ENCODE measurements at regions of chr21 and their contacts with region 1.

Region 1: GRCh38 chr21:35217504-35218060 is 168.5 kb upstream of the RUNX1 start:
- DNase-seq: peak; percentile 100
- H3K4me3 ChIP-seq: no peak overlapping the region
- H3K27ac ChIP-seq: peak overlapping the region; percentile 98
- H3K4me1 ChIP-seq: peaks cover 28% of the 10 kb centered on the region
- H3K27me3 ChIP-seq: no peaks in the 10 kb centered on the region
- CTCF ChIP-seq: no peak

Region 2: DNA sequence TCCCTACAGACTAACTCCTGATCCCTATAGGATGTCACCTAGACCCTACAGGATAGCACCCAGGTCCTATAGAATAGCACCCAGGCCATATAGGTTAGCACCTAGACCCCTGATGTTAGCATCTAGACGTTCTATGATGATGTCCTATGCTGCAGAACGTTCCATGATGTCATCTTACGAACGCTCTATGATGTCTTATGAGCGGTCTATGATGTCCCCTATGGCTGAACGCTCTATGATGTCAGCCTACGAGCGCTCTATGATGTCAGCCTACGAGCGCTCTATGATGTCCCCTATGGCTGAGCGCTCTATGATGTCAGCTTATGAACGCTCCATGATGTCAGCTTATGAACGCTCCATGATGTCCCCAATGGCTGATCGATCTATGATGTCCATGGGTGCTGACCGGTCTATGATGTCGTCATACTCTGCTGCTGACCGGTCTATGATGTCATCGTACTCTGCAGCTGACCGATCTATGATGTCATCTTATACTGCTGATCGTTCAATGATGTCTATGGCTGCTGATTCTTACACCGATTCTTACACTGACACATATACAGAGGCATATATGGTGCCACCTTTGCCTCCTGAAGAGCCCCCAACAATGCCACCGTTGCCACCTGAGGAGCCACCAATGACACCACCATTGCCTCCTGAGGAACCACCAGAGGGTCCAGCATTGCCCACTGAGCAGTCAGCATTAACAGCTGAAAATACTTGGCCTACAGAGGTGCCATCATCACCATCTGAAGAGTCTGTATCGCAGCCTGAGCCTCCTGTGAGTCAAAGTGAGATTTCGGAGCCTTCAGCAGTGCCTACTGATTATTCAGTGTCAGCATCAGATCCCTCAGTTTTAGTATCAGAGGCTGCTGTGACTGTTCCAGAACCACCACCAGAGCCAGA is 1665.2 kb before region 1 on chr21:
- CTCF ChIA-PET with region 1: no interaction called
- dilution Hi-C with region 1: no loop called
- in situ Hi-C with region 1: no loop called
- intact Hi-C with region 1: no loop called
- DNase-seq: no peak
- H3K4me3 ChIP-seq: no peak overlapping the region
- H3K27ac ChIP-seq: no peak overlapping the region
- H3K4me1 ChIP-seq: no peaks in the 10 kb centered on the region
- H3K27me3 ChIP-seq: no peaks in the 10 kb centered on the region
- CTCF ChIP-seq: no peak

Region 3: DNA sequence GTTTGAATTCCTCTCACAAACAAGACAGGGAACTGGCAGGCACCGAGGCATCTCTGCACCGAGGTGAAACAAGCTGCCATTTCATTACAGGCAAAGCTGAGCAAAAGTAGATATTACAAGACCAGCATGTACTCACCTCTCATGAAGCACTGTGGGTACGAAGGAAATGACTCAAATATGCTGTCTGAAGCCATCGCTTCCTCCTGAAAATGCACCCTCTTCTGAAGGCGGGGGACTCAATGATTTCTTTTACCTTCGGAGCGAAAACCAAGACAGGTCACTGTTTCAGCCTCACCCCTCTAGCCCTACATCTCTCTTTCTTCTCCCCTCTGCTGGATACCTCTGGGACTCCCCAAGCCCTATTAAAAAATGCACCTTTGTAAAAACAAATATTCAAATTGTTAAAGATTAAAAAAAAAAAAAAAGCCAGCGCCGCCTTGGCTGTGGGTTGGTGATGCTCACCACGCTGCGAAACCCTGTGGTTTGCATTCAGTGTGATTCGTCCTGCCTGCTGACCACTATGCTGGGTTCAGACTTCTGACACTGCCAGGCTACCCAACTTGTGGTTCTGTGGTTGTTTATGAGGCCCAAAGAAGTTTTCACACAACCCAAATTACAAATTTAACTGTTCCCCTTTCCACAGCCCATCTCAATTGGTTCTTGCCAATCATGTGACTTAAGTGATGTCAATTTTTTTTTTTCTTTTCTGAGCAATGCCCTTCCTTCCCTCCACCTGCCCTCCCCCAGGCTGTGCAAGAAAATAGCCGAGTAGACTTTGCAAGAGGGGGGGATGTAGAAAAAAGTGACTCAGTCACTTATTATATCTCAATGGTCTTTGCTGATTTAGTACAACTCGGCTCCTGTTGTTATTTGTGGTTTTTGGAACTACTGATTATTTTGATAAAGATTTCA is 168.6 kb before region 1 on chr21 and contains the start of gene RUNX1:
- CTCF ChIA-PET with region 1: no interaction called
- dilution Hi-C with region 1: no loop called
- in situ Hi-C with region 1: no loop called
- intact Hi-C with region 1: loop called (anchors 1 kb)
- DNase-seq: peak; percentile 91
- H3K4me3 ChIP-seq: peak within 1 kb of the TSS; percentile 13 to 35 (median 34)
- H3K27ac ChIP-seq: peak within 1 kb of the TSS; percentile 90
- H3K4me1 ChIP-seq: peaks cover 32% of the 10 kb centered on the region
- H3K27me3 ChIP-seq: no peaks in the 10 kb centered on the region
- CTCF ChIP-seq: no peak
- total RNA-seq, gene RUNX1: 126 to 133 TPM

Region 4: GRCh38 chr21:35149698-35150097 is 67.9 kb before region 1 on chr21:
- CTCF ChIA-PET with region 1: no interaction called
- dilution Hi-C with region 1: no loop called
- in situ Hi-C with region 1: no loop called
- intact Hi-C with region 1: loop called (anchors 2 kb)
- DNase-seq: peak; percentile 84
- H3K4me3 ChIP-seq: no peak overlapping the region
- H3K27ac ChIP-seq: peak overlapping the region; percentile 99
- H3K4me1 ChIP-seq: peaks cover 69% of the 10 kb centered on the region
- H3K27me3 ChIP-seq: no peaks in the 10 kb centered on the region
- CTCF ChIP-seq: no peak

Region 5: DNA sequence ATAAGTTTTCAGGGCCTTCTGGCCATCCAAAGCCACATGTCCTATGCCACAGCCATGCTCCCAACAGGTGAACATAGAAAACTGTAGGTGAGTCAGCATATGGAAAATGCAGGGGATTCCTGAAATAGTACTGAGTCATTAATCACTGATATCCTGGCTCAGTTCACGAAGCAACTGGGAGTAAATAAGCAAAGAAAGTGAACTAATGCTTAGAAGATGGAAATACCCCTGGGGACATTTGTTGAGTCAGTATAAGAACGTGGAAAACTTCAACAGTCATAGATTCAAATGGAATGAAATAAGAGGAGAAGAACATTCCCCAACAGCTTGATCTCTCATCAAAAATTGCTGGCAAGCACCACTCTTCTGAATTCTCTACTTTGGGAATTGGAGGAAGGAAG is 19.6 kb before region 1 on chr21:
- CTCF ChIA-PET with region 1: no interaction called
- dilution Hi-C with region 1: no loop called
- in situ Hi-C with region 1: no loop called
- intact Hi-C with region 1: loop called (anchors 1 kb)
- DNase-seq: peak; percentile 99
- H3K4me3 ChIP-seq: no peak overlapping the region
- H3K27ac ChIP-seq: peak overlapping the region; percentile 96
- H3K4me1 ChIP-seq: peaks cover 23% of the 10 kb centered on the region
- H3K27me3 ChIP-seq: no peaks in the 10 kb centered on the region
- CTCF ChIP-seq: no peak

Region 6: DNA sequence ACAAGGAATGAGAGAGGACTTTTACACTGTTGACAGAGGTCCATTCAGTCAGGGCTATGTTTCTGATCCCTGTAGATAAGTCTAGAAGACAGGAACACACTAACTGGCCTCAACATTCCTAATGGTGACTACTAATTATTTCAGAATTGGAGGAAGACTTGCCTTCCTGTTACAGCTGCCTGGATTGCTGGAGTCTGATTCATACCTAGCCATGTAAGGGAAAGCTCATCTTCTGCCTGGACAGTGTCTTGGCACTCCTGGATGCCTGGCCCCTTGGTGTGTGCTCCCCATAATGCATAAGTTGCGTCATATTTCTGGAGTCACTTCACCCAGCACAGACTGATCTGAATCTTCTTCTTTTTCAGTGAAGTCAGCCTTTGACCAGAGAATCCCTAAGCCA is 157.5 kb after region 1 on chr21:
- CTCF ChIA-PET with region 1: no interaction called
- dilution Hi-C with region 1: no loop called
- in situ Hi-C with region 1: no loop called
- intact Hi-C with region 1: loop called (anchors 2 kb)
- DNase-seq: peak; percentile 77
- H3K4me3 ChIP-seq: no peak overlapping the region
- H3K27ac ChIP-seq: peak overlapping the region; percentile 42
- H3K4me1 ChIP-seq: peaks cover 37% of the 10 kb centered on the region
- H3K27me3 ChIP-seq: no peaks in the 10 kb centered on the region
- CTCF ChIP-seq: no peak